ENCODE measurements at regions of chr19 and their contacts with region 1.

Region 1: GRCh38 chr19:4916292-4917082 is 7.2 kb downstream of the UHRF1 start:
- DNase-seq: no peak

Region 2: GRCh38 chr19:5253406-5254110 is 337.1 kb after region 1 on chr19:
- intact Hi-C with region 1: loop called in 1 of 2 experiments (anchors 2 kb)
- DNase-seq: no peak

Measured in posterior vena cava (tissue), 2 donors.